Body of pancreas (tissue), 4 donors: ENCODE measurements at regions of chr2 and their contacts with region 1.

Region 1: GRCh38 chr2:236177967-236178899 is 10.0 kb upstream of the GBX2 start:
- DNase-seq: peak; percentile 41 to 70 (median 54)
- ATAC-seq: peak; percentile 71
- H3K4me3 ChIP-seq: no peak overlapping the region
- H3K27ac ChIP-seq: no peak overlapping the region
- H3K4me1 ChIP-seq: peaks cover 27% of the 10 kb centered on the region
- H3K27me3 ChIP-seq: peaks cover 0 to 48% of the 10 kb centered on the region in 2 donors
- CTCF ChIP-seq: peak; percentile 45 to 71 (median 54)
- POLR2A ChIP-seq: no peak

Region 2: GRCh38 chr2:235766278-235766677 is 412.0 kb before region 1 on chr2:
- intact Hi-C with region 1: loop called (anchors 5 kb)
- DNase-seq: peak; percentile 70 to 82 (median 74)
- ATAC-seq: peak; percentile 91
- H3K4me3 ChIP-seq: no peak overlapping the region
- H3K27ac ChIP-seq: no peak overlapping the region
- H3K4me1 ChIP-seq: no peaks in the 10 kb centered on the region
- H3K27me3 ChIP-seq: no peaks in the 10 kb centered on the region
- CTCF ChIP-seq: peak; percentile 79 to 96 (median 85)
- POLR2A ChIP-seq: no peak